H1 (cell line): ENCODE measurements at regions of chr7 and their contacts with region 1.

Region 1: DNA sequence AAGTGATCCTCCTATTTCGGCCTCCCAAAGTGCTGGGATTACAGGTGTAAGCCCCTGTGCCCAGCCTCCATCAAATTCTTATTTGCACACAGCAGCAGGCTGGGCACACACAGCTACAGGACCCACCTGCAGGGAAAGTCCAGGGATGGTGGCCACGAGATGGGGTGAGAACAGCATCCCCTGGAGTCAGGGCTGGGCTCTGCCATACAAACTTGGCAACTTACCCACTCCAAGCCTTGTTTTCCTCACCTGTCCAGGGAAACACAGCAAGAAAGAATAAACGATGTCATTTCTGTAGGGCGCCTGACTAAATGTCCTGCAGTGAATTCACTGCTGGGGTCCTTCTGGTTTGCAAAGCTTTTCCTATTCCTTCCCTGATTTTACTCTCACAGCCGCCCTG is 5.5 kb downstream of the MYH16 start:
- DNase-seq: no peak
- H3K4me3 ChIP-seq: no peak overlapping the region
- H3K27ac ChIP-seq: no peak overlapping the region
- H3K4me1 ChIP-seq: no peaks in the 10 kb centered on the region
- H3K27me3 ChIP-seq: no peaks in the 10 kb centered on the region
- CTCF ChIP-seq: peak; percentile 2 to 35 (median 28); a peak in 2 of 4 replicates
- EP300 ChIP-seq: no peak
- POLR2A ChIP-seq: no peak
- RAD21 ChIP-seq: peak; percentile 32 to 36

Region 2: DNA sequence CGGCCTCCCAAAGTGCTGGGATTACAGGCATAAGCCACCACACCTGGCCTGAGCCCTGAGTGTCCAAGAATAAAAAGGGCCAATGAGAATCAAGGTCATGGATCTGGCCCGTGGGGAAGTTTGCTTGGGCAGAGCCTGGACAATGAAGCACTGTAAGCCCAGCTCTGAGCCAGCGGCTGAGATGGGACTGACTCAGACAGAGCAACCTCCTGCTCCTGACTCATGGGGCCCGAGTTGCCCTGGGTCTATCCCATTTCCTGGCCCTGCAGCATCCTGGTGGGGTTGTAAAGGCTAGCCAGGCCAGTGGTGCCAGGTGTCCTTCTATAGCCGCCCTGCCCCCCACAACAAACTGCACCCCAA is 10.7 kb before region 1 on chr7:
- CTCF ChIA-PET with region 1: interaction called, 15 read pairs
- POLR2A ChIA-PET with region 1: interaction called, 4 read pairs
- DNase-seq: no peak
- H3K4me3 ChIP-seq: no peak overlapping the region
- H3K27ac ChIP-seq: no peak overlapping the region
- H3K4me1 ChIP-seq: 0 out of 7 replicates have a peak, but pooled peaks cover 0 to 2% (median 0%) of the 10 kb centered on the region in 4 experiments
- H3K27me3 ChIP-seq: no peaks in the 10 kb centered on the region
- CTCF ChIP-seq: no peak
- EP300 ChIP-seq: no peak
- POLR2A ChIP-seq: no peak
- RAD21 ChIP-seq: no peak